ENCODE measurements at regions of chr12 and their contacts with region 1.

Region 1: GRCh38 chr12:12081836-12082497 is 11.2 kb downstream of the BCL2L14 start:
- DNase-seq: peak in 3 of 14 experiments; percentile 18 to 28 (median 23)
- ATAC-seq: no peak
- H3K4me3 ChIP-seq: no peak overlapping the region
- H3K4me3 Mint-ChIP-seq: no peak overlapping the region
- H3K27ac ChIP-seq: no peak overlapping the region
- H3K27ac Mint-ChIP-seq: no peak overlapping the region
- H3K4me1 ChIP-seq: no peaks in the 10 kb centered on the region
- H3K4me1 Mint-ChIP-seq: no peaks in the 10 kb centered on the region
- H3K27me3 ChIP-seq: no peaks in the 10 kb centered on the region
- H3K27me3 Mint-ChIP-seq: no peaks in the 10 kb centered on the region
- CTCF ChIP-seq: no peak

Region 2: DNA sequence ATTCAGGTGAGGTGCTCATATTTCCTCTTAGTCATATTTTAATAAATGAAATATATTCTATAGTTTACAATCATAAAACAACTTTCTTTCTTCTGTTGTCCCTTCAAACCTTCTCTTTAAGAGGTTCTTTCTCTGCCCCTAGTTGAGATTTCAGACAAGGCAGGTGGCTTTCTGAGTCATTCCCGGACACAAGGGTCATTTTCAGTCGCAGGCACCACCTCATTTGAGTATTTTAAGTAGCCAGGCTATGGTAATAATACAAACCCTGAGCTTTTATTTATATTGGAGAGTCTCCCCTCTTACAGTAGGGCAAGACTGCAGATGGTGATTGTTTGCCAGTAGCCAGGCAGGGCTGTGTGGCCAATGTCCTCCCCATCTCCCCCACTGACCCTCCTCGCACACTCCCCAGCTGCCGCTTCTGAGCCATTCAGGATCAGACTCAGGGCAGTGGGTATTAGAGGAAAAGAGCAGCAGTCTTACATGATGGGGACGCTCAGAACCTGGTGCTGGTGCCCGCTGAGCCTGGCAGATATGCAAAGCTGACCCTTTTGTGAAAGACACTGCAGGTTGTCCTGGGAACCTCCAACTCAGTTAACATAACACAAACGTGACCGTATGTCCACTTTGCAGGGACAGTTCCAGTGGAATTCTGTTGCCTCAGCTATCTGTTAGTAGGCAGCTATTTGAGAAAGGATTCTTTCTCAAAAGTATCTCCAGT is 112.4 kb before region 1 on chr12:
- CTCF ChIA-PET with region 1: no interaction called
- POLR2A ChIA-PET with region 1: no interaction called
- intact Hi-C with region 1: no loop called
- DNase-seq: no peak
- ATAC-seq: no peak
- H3K4me3 ChIP-seq: no peak overlapping the region
- H3K4me3 Mint-ChIP-seq: no peak overlapping the region
- H3K27ac ChIP-seq: no peak overlapping the region
- H3K27ac Mint-ChIP-seq: no peak overlapping the region
- H3K4me1 ChIP-seq: no peaks in the 10 kb centered on the region
- H3K4me1 Mint-ChIP-seq: no peaks in the 10 kb centered on the region
- H3K27me3 ChIP-seq: no peaks in the 10 kb centered on the region
- H3K27me3 Mint-ChIP-seq: no peaks in the 10 kb centered on the region
- CTCF ChIP-seq: no peak

Region 3: GRCh38 chr12:12327802-12328201 is 245.8 kb after region 1 on chr12:
- CTCF ChIA-PET with region 1: no interaction called
- POLR2A ChIA-PET with region 1: no interaction called
- intact Hi-C with region 1: loop called in 1 of 2 experiments (anchors 5 kb)
- DNase-seq: peak in 5 of 14 experiments; percentile 7 to 82 (median 74)
- ATAC-seq: peak; percentile 92
- H3K4me3 ChIP-seq: no peak overlapping the region
- H3K4me3 Mint-ChIP-seq: no peak overlapping the region
- H3K27ac ChIP-seq: no peak overlapping the region
- H3K27ac Mint-ChIP-seq: peak overlapping the region; percentile 21
- H3K4me1 ChIP-seq: peaks cover 4% of the 10 kb centered on the region
- H3K4me1 Mint-ChIP-seq: peaks cover 14% of the 10 kb centered on the region
- H3K27me3 ChIP-seq: no peaks in the 10 kb centered on the region
- H3K27me3 Mint-ChIP-seq: no peaks in the 10 kb centered on the region
- CTCF ChIP-seq: peak; percentile 81